ENCODE measurements at regions of chr4 and their contacts with region 1.

Region 1: DNA sequence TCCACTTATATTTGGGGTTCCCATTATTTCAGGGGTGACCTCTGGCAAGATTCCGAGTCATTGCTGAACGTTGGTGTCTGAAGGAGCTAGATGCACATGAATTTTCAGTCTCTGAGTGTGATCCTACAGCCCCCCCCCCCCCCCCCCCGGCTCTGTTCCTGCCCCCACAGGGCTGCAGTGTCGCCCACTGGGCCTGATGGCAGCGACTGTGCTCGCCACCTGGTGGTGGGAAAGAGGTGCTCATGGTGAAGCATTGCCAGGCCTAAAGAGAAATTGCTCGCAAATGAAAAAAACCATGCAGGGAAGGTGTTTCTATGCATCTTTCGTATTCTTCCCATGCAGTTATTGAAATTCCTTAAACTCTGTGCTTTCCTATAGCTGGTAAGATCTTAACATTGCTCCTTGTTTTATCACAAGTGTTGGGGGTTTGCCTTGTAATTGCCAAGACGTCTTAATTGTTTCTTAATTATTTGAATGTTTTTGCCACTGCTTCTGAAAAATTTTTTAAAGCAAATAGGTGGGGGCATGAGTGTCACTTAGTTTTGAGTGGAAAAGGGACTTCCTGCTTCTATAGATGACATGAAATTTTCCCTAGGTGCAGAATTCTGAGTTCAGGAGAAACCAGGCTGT is 63.2 kb downstream of the CLDN22 start:
- DNase-seq: peak; percentile 54
- ATAC-seq: peak; percentile 85
- H3K4me3 ChIP-seq: no peak overlapping the region
- H3K27ac ChIP-seq: no peak overlapping the region
- H3K4me1 ChIP-seq: 0 out of 2 replicates have a peak, but pooled peaks cover 3% of the 10 kb centered on the region
- H3K27me3 ChIP-seq: no peaks in the 10 kb centered on the region
- CTCF ChIP-seq: peak; percentile 68
- POLR2A ChIP-seq: no peak
- RAD21 ChIP-seq: peak; percentile 66

Region 2: DNA sequence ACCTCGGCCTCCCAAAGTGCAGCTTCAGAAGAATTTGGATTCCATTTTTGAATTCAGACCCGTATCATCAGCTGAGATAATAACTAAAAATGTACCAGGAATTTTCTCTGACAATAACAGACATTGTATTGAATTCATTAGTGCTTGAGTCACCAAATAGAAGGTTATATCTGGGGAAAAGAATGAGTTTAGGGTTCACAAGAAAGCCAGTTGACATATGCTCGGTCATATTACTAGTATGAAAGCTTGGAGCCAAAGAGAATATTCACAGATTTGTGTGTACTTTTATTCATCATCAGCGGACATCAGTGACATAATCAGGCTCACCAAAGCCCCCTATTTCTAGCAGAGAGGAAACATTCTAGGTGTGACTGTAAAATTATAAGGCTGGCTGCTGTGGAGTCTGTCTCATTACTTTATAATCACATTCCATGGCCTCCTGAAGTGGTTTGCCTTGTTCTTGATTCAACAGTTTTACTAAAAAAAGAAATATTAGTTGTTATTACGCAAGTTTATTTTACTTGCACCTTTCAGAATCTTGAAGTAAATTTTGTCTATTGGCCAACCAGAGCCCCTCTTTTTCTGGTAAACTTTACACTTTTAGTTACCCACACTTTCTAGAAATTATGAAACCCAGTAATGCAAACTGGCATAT is 325.1 kb before region 1 on chr4:
- CTCF ChIA-PET with region 1: interaction called, 30 read pairs
- POLR2A ChIA-PET with region 1: no interaction called
- dilution Hi-C with region 1: no loop called
- in situ Hi-C with region 1: loop called (anchors 5 kb)
- intact Hi-C with region 1: no loop called
- DNase-seq: peak; percentile 83
- ATAC-seq: no peak
- H3K4me3 ChIP-seq: no peak overlapping the region
- H3K27ac ChIP-seq: no peak overlapping the region; the same call in 1 of the 2 replicates
- H3K4me1 ChIP-seq: peaks cover 7% of the 10 kb centered on the region
- H3K27me3 ChIP-seq: no peaks in the 10 kb centered on the region
- CTCF ChIP-seq: no peak
- POLR2A ChIP-seq: no peak
- RAD21 ChIP-seq: no peak

Region 3: GRCh38 chr4:183030309-183030708 is 226.6 kb before region 1 on chr4:
- CTCF ChIA-PET with region 1: no interaction called
- POLR2A ChIA-PET with region 1: interaction called, 18 read pairs
- dilution Hi-C with region 1: no loop called
- in situ Hi-C with region 1: no loop called
- intact Hi-C with region 1: no loop called
- DNase-seq: no peak
- ATAC-seq: no peak
- H3K4me3 ChIP-seq: no peak overlapping the region
- H3K27ac ChIP-seq: no peak overlapping the region
- H3K4me1 ChIP-seq: no peaks in the 10 kb centered on the region
- H3K27me3 ChIP-seq: peaks cover 29% of the 10 kb centered on the region
- CTCF ChIP-seq: no peak
- POLR2A ChIP-seq: no peak
- RAD21 ChIP-seq: no peak

Region 4: GRCh38 chr4:183329954-183330742 is 73.3 kb after region 1 on chr4:
- CTCF ChIA-PET with region 1: no interaction called
- POLR2A ChIA-PET with region 1: no interaction called
- dilution Hi-C with region 1: no loop called
- in situ Hi-C with region 1: no loop called
- intact Hi-C with region 1: no loop called
- DNase-seq: no peak
- ATAC-seq: no peak
- H3K4me3 ChIP-seq: no peak overlapping the region
- H3K27ac ChIP-seq: no peak overlapping the region
- H3K4me1 ChIP-seq: peaks cover 5% of the 10 kb centered on the region
- H3K27me3 ChIP-seq: no peaks in the 10 kb centered on the region
- CTCF ChIP-seq: no peak
- POLR2A ChIP-seq: no peak
- RAD21 ChIP-seq: no peak

Measured in IMR-90 (cell line).